Colonic mucosa (tissue), 4 donors: ENCODE measurements at regions of chr3 and their contacts with region 1.

Region 1: DNA sequence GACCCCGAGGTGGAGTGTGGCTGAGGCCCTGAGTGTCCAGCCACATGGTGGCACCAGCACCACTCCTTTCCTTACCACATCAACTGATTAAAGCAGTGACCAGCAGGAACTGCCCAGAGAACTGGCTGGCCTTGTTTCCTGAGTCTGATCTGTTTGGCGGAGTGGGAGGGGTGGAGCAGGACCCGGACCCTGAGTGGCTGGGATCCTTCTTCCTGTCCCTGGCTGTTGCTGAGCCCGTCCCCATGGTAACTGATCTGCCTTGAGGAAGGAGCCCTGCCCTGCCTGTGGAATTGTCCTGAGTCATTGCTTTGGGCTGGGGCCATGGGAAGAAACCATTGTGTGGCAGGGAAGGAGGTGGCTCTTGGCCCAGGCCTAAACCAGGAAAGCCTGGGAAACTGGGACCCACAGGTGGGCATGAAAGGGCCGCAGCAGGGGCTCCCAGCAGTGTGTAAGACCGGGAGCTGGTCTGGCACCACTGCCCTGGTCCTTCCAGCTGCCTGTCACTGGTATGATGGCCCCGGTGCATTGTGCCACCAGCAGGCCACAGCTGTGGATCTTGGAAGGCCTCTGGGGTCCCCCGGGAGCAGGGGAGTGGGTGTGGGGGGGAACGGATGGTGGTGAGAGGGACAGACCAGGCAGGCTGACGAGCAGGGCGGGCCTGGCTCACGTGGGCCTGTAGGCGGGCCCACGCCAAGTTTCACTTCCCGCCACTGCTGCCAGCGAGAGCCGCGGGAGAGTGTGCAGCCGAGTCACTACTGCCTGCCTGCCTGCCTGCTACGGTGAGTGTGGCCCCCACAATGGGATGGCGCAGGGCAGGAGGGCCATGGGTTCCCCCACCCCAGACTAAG is 19.2 kb downstream of the ATRIP start:
- DNase-seq: peak; percentile 97
- H3K4me3 ChIP-seq: peak overlapping the region; percentile 54
- H3K27ac ChIP-seq: peak overlapping the region; percentile 94
- H3K4me1 ChIP-seq: peaks cover 31% of the 10 kb centered on the region
- H3K27me3 ChIP-seq: no peaks in the 10 kb centered on the region
- CTCF ChIP-seq: peak; percentile 53

Region 2: GRCh38 chr3:48504051-48504946 is 38.5 kb after region 1 on chr3 and contains the start of gene SHISA5:
- intact Hi-C with region 1: loop called (anchors 5 kb)
- DNase-seq: peak; percentile 88
- H3K4me3 ChIP-seq: peak within 1 kb of the TSS; percentile 53
- H3K27ac ChIP-seq: peak within 1 kb of the TSS; percentile 72
- H3K4me1 ChIP-seq: no peaks in the 10 kb centered on the region
- H3K27me3 ChIP-seq: no peaks in the 10 kb centered on the region
- CTCF ChIP-seq: no peak
- total RNA-seq, gene SHISA5: 115 to 123 TPM

Region 3: GRCh38 chr3:48635222-48636021 is 169.7 kb after region 1 on chr3 and contains the start of gene SLC26A6:
- intact Hi-C with region 1: loop called (anchors 10 kb)
- DNase-seq: peak; percentile 99
- H3K4me3 ChIP-seq: peak within 1 kb of the TSS; percentile 87
- H3K27ac ChIP-seq: peak within 1 kb of the TSS; percentile 78
- H3K4me1 ChIP-seq: peaks cover 4% of the 10 kb centered on the region
- H3K27me3 ChIP-seq: no peaks in the 10 kb centered on the region
- CTCF ChIP-seq: peak; percentile 50
- total RNA-seq, gene SLC26A6: 94.9 to 112 TPM